ENCODE measurements at regions of chr9 and their contacts with region 1.

Region 1: GRCh38 chr9:137406876-137407589 is 15.9 kb downstream of the EXD3 start:
- DNase-seq: no peak

Region 2: DNA sequence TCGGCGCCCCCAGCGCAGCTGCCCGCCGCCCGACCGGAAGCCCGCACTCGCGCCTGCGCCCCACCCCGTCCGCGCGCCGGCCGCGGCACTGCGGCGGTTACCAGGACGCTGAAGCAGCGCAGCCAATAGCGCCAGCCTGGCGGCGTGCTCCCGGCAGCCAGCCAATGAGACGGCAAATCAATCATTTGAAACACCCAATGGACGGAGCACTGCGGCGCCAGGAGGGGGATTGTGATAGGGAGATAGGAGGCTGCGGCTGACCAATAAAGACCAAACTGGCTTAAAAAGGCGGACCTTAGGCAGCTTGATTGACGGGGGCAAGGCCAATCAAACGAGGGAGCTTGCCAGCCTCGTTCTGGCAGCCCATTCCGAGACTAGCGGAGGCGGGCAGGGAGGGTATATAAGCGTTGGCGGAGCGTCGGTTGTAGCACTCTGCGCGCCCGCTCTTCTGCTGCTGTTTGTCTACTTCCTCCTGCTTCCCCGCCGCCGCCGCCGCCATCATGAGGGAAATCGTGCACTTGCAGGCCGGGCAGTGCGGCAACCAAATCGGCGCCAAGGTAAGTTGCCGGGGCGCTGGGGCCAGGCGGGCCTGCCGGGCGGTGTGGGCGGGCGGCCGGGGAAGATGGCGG is 166.1 kb before region 1 on chr9 and contains the start of gene TUBB4B:
- intact Hi-C with region 1: loop called (anchors 1 kb)
- DNase-seq: peak; percentile 99
- total RNA-seq, gene TUBB4B: 304 TPM

Region 3: GRCh38 chr9:137295238-137295811 is 111.7 kb before region 1 on chr9:
- intact Hi-C with region 1: loop called (anchors 2 kb)
- DNase-seq: no peak

Region 4: DNA sequence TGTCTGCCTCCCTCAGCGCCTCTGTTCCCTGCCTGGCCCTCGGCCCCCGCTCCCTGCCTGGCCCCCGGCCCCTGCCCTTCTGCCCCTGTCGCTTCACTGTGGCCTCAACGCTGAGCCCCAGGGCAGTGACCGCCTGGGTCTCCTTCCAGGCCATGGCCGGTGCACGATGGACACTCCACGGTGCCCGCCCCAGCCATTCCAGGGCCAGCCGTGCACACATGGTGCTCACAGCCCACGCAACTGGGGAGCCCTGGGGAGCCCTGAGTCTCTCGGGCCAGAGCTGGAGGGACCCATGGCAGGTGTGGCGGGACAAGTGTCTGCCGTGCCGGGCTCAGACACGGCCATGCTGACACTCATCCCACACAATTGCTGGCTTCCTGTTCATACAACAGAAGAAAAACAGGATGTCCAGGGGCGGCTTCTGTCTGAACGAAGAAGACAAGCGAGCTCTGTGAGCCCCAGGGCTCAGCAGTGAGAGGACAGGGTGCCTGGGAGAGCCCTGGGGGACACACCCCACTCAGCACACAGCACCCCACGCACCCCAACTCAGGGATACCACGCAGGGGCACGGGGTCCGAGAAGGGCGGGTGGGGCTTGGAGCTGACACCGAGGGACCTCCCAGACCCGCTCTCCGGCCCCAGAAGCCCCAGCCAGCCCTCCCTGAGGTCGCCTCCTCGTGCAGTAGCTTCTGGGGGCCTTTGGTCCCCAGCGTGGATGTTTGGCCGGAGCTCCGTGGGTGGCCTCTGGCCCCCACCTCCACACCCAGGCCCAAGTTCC is 19.7 kb before region 1 on chr9:
- intact Hi-C with region 1: no loop called
- DNase-seq: no peak

Region 5: GRCh38 chr9:137564817-137565411 is 157.9 kb after region 1 on chr9:
- intact Hi-C with region 1: no loop called
- DNase-seq: no peak

Measured in cardiac septum (tissue), 1 donor.